Naive thymus-derived CD4-positive, alpha-beta T cell (primary cell): ENCODE measurements at regions of chr6 and their contacts with region 1.

Region 1: DNA sequence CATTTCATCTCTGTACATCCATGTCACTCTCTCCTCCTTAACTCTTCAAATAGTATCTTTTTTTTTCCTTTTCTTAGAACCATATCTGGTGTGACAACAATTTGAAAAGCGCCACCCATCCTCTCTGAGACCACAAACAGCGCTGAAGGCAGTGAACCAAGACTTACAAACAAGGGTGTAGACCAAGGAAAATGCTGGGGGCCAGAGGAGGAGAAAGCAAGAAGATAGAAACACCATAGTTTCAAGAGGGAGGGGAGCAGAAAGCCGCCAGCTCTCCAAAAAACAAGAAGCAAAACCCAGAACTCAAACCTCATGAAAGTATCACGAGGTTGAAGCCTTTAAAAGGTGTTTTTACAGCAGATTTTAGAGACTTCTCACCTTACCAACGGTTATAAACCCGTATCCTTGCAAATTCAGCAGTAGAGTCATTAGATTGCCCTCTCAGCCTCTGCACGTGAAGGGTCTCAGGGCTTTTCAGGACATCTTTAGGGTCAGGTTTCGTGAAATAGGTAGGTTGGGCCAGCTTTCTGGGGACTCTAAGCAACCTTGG is 13.3 kb upstream of the RIPOR2 start:
- DNase-seq: peak in 7 of 9 donors; percentile 67 to 93 (median 83)
- ATAC-seq: peak; percentile 72
- H3K4me3 ChIP-seq: peak overlapping the region; percentile 50
- H3K4me3 Mint-ChIP-seq: peak overlapping the region; percentile 71 to 86 (median 76)
- H3K27ac ChIP-seq: peak overlapping the region; percentile 75
- H3K27ac Mint-ChIP-seq: peak overlapping the region; percentile 92 to 98 (median 95)
- H3K4me1 ChIP-seq: peaks cover 62 to 68% of the 10 kb centered on the region in 2 donors
- H3K4me1 Mint-ChIP-seq: peaks cover 63 to 91% (median 75%) of the 10 kb centered on the region in 7 donors
- H3K27me3 ChIP-seq: no peaks in the 10 kb centered on the region
- H3K27me3 Mint-ChIP-seq: no peaks in the 10 kb centered on the region

Region 2: DNA sequence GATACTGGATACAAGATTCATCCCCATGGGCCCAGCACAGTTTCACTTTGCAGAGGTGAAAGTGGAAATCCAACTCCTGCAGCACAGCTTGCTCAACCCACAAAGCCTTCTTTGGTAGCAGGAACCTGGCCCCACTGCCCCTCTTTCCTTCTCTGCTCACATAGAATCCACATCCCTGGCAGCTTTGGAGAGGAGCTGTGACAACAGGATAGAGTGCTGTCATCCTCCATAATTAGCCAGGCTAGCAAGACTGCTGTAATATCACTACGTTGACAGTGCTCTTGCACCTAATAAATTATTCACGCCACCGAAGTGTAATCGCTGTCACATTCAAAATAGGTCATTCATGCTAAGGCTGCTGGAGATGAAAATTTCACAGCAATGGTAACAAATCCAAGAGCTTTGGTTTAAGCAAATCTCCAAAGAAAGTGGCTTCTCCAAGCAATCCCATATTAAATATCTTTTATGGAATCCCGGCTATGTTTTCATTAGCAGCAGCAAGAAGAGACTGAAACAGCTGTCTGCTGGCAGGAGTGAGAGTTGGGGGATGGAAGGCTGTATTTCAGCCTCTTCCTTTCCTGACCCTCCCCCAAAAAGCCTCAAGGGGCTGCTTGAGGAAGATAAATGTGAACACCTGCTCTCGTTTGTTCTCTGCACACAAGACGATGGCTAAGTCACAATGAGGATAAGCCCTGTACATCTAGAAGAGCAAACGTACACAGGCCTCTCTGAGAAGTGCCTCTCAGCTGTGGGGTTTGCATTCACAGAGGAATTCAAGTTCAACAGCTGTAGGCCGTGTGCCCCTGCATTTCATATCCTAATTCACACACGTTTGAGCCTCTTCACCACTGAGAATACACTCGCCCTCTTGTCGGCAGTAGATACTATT is 29.8 kb before region 1 on chr6:
- CTCF ChIA-PET with region 1: no interaction called
- POLR2A ChIA-PET with region 1: interaction called, 57 read pairs
- intact Hi-C with region 1: no loop called
- DNase-seq: no peak
- ATAC-seq: peak; percentile 53
- H3K4me3 ChIP-seq: peak overlapping the region; percentile 24
- H3K4me3 Mint-ChIP-seq: peak overlapping the region; percentile 74 to 97 (median 86)
- H3K27ac ChIP-seq: peak overlapping the region; percentile 71
- H3K27ac Mint-ChIP-seq: peak overlapping the region; percentile 61 to 98 (median 90)
- H3K4me1 ChIP-seq: peaks cover 90% of the 10 kb centered on the region in 2 donors
- H3K4me1 Mint-ChIP-seq: peaks cover 79 to 100% (median 93%) of the 10 kb centered on the region in 7 donors
- H3K27me3 ChIP-seq: no peaks in the 10 kb centered on the region
- H3K27me3 Mint-ChIP-seq: no peaks in the 10 kb centered on the region

Region 3: DNA sequence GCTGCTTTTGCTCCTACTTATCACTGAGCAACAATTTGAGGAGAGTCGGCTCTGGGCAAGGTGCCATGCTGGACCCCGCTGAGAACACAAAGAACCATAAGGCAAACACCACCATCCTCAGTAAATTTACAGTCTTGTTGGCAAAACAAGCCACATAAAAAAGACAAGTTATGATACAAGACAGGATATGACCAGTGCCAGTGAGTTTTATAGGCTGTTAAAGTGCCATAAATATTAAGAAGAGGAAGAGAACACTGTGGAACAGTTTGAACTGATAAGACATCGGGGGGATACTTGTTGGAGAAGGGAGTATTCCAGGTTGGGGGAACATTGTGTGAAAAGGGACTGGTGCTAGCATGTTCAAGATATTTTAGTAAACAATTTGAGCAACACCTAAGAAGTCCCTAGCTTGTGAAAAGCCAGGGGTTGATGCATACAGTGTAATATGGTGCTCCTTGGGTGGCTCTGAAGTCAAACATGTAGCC is 11.9 kb after region 1 on chr6:
- CTCF ChIA-PET with region 1: interaction called, 6 read pairs
- POLR2A ChIA-PET with region 1: interaction called, 1,138 read pairs
- intact Hi-C with region 1: loop called in 1 of 2 experiments (anchors 1 kb)
- DNase-seq: peak in 6 of 9 donors; percentile 46 to 70 (median 60)
- ATAC-seq: peak; percentile 80
- H3K4me3 ChIP-seq: peak overlapping the region; percentile 14
- H3K4me3 Mint-ChIP-seq: peak overlapping the region; percentile 46 to 81 (median 72)
- H3K27ac ChIP-seq: peak overlapping the region; percentile 64
- H3K27ac Mint-ChIP-seq: peak overlapping the region; percentile 44 to 97 (median 93)
- H3K4me1 ChIP-seq: peaks cover 70 to 74% of the 10 kb centered on the region in 2 donors
- H3K4me1 Mint-ChIP-seq: peaks cover 59 to 100% (median 90%) of the 10 kb centered on the region in 7 donors
- H3K27me3 ChIP-seq: no peaks in the 10 kb centered on the region
- H3K27me3 Mint-ChIP-seq: no peaks in the 10 kb centered on the region

Region 4: GRCh38 chr6:24974182-24975171 is 25.4 kb after region 1 on chr6:
- CTCF ChIA-PET with region 1: interaction called, 4 read pairs
- POLR2A ChIA-PET with region 1: interaction called, 1,138 read pairs
- intact Hi-C with region 1: loop called in 1 of 2 experiments (anchors 1 kb)
- DNase-seq: peak in 1 of 9 donors; percentile 40
- ATAC-seq: peak; percentile 73
- H3K4me3 ChIP-seq: peak overlapping the region; percentile 6
- H3K4me3 Mint-ChIP-seq: peak overlapping the region in 3 of 10 donors; percentile 2 to 58 (median 20)
- H3K27ac ChIP-seq: no peak overlapping the region
- H3K27ac Mint-ChIP-seq: peak overlapping the region in 7 of 9 donors; percentile 1 to 90 (median 27)
- H3K4me1 ChIP-seq: peaks cover 19 to 31% of the 10 kb centered on the region in 2 donors
- H3K4me1 Mint-ChIP-seq: peaks cover 41 to 80% (median 72%) of the 10 kb centered on the region in 7 donors
- H3K27me3 ChIP-seq: no peaks in the 10 kb centered on the region
- H3K27me3 Mint-ChIP-seq: no peaks in the 10 kb centered on the region

Region 5: GRCh38 chr6:24980507-24981387 is 31.7 kb after region 1 on chr6:
- CTCF ChIA-PET with region 1: interaction called, 5 read pairs
- POLR2A ChIA-PET with region 1: interaction called, 1,138 read pairs
- intact Hi-C with region 1: loop called in 1 of 2 experiments (anchors 1 kb)
- DNase-seq: no peak
- ATAC-seq: no peak
- H3K4me3 ChIP-seq: no peak overlapping the region
- H3K4me3 Mint-ChIP-seq: peak overlapping the region in 3 of 10 donors; percentile 21 to 36 (median 29)
- H3K27ac ChIP-seq: no peak overlapping the region
- H3K27ac Mint-ChIP-seq: peak overlapping the region in 5 of 9 donors; percentile 13 to 80 (median 62)
- H3K4me1 ChIP-seq: peaks cover 23% of the 10 kb centered on the region in 2 donors
- H3K4me1 Mint-ChIP-seq: peaks cover 32 to 83% (median 67%) of the 10 kb centered on the region in 7 donors
- H3K27me3 ChIP-seq: no peaks in the 10 kb centered on the region
- H3K27me3 Mint-ChIP-seq: no peaks in the 10 kb centered on the region